CD4-positive, alpha-beta T cell (primary cell): ENCODE measurements at regions of chr7 and their contacts with region 1.

Region 1: DNA sequence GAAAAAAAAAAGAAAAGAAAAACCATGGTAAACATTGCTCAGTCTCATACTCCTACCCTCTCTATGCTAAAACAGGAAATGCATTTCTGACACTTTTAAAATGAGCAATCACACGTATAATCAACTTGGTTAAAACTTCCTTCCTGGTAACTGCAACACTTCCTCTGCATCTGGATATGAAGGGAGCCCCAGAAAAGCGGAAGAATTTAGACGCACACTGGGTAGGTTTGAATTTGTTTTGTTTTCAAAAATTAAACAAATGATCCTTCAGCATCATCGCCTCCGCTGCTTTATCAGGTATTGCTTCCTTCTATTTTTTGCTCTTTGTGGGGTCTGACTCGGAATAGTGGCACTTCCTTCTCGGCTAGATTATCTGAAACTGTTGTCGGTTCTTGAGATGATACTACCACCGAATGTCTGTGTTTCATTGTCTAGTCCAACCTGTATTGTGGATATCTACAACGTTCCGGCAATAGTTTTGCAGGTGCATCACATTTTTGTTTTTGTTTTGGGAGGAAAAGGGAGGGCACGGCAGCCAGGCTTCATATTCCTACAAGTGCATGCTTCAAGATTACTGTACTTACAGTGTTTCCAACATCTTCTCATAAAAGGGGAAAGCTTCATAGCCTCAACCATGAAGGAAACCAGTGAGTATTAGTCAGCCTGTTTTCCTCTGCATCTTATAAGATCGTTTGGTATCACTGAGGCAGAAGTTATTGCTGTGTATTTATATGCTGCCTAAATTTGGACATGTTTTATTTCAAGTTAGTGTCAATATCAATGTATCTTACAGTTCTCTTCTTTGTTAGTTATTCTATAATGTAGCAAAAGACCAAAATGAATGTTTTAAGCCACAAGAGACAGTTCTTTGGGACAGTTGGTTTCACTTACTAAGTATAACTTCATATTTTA is at the start of gene PIK3CG:
- DNase-seq: peak in 5 of 14 experiments; percentile 6 to 86 (median 75)
- ATAC-seq: peak; percentile 94
- H3K4me3 ChIP-seq: peak within 1 kb of the TSS; percentile 62
- H3K4me3 Mint-ChIP-seq: peak within 1 kb of the TSS; percentile 92
- H3K27ac ChIP-seq: peak within 1 kb of the TSS; percentile 77 to 80
- H3K27ac Mint-ChIP-seq: peak within 1 kb of the TSS; percentile 93
- H3K4me1 ChIP-seq: peaks cover 61% of the 10 kb centered on the region
- H3K4me1 Mint-ChIP-seq: peaks cover 82% of the 10 kb centered on the region
- H3K27me3 ChIP-seq: no peaks in the 10 kb centered on the region
- H3K27me3 Mint-ChIP-seq: no peaks in the 10 kb centered on the region
- CTCF ChIP-seq: no peak
- total RNA-seq, gene PIK3CG: 20.8 to 21.2 TPM

Region 2: GRCh38 chr7:106009403-106010226 is 855.8 kb before region 1 on chr7:
- CTCF ChIA-PET with region 1: no interaction called
- POLR2A ChIA-PET with region 1: no interaction called
- intact Hi-C with region 1: no loop called
- DNase-seq: peak; percentile 70 to 91 (median 78)
- ATAC-seq: peak; percentile 97
- H3K4me3 ChIP-seq: no peak overlapping the region
- H3K4me3 Mint-ChIP-seq: peak overlapping the region; percentile 16
- H3K27ac ChIP-seq: no peak overlapping the region
- H3K27ac Mint-ChIP-seq: peak overlapping the region; percentile 38
- H3K4me1 ChIP-seq: peaks cover 21% of the 10 kb centered on the region
- H3K4me1 Mint-ChIP-seq: peaks cover 51% of the 10 kb centered on the region
- H3K27me3 ChIP-seq: no peaks in the 10 kb centered on the region
- H3K27me3 Mint-ChIP-seq: no peaks in the 10 kb centered on the region
- CTCF ChIP-seq: peak; percentile 99

Region 3: DNA sequence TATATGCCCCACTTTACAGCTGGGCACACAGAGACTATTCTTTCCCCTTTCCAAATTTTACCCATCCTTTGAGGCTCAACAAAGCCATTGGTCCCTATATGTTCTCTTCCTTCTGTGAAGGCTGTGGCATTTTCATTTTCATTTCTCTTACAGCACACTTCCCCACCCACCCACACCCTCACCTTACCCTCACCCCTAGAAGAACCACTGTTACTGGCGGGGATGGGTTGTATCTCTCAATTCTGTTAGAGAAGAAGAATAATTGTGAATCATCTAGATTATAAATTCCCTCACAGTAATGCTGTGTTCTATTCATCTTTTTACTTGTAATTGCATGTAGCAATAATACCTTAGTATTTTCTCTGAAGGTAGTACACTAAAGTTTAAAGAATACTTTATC is 194.2 kb before region 1 on chr7:
- CTCF ChIA-PET with region 1: no interaction called
- POLR2A ChIA-PET with region 1: no interaction called
- intact Hi-C with region 1: loop called in 1 of 2 experiments (anchors 5 kb)
- DNase-seq: no peak
- ATAC-seq: no peak
- H3K4me3 ChIP-seq: no peak overlapping the region
- H3K4me3 Mint-ChIP-seq: no peak overlapping the region
- H3K27ac ChIP-seq: no peak overlapping the region
- H3K27ac Mint-ChIP-seq: no peak overlapping the region
- H3K4me1 ChIP-seq: no peaks in the 10 kb centered on the region
- H3K4me1 Mint-ChIP-seq: no peaks in the 10 kb centered on the region
- H3K27me3 ChIP-seq: no peaks in the 10 kb centered on the region
- H3K27me3 Mint-ChIP-seq: no peaks in the 10 kb centered on the region
- CTCF ChIP-seq: no peak

Region 4: DNA sequence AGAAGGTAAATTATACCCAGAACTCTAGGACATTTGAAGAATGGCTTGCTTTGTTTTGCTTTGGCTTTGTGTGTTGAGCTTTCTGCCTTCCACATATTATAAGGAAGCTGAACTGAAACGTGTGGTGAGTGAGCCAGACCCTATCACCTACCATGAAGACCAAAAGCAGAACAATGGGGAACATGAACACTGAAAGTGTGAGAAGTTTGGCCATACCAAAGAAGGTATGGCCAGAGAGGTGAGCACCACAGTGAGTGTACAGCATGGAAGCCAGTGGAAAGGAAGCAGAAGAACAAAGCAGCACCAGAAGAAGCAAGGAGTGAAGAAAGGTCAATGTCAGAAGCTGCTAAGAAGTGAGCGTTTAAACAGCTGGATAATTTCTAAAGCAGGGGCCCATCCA is 144.7 kb before region 1 on chr7:
- CTCF ChIA-PET with region 1: no interaction called
- POLR2A ChIA-PET with region 1: no interaction called
- intact Hi-C with region 1: no loop called
- DNase-seq: peak in 1 of 14 experiments; percentile 3
- ATAC-seq: no peak
- H3K4me3 ChIP-seq: no peak overlapping the region
- H3K4me3 Mint-ChIP-seq: no peak overlapping the region
- H3K27ac ChIP-seq: no peak overlapping the region
- H3K27ac Mint-ChIP-seq: no peak overlapping the region
- H3K4me1 ChIP-seq: peaks cover 6% of the 10 kb centered on the region
- H3K4me1 Mint-ChIP-seq: no peaks in the 10 kb centered on the region
- H3K27me3 ChIP-seq: no peaks in the 10 kb centered on the region
- H3K27me3 Mint-ChIP-seq: no peaks in the 10 kb centered on the region
- CTCF ChIP-seq: no peak

Region 5: DNA sequence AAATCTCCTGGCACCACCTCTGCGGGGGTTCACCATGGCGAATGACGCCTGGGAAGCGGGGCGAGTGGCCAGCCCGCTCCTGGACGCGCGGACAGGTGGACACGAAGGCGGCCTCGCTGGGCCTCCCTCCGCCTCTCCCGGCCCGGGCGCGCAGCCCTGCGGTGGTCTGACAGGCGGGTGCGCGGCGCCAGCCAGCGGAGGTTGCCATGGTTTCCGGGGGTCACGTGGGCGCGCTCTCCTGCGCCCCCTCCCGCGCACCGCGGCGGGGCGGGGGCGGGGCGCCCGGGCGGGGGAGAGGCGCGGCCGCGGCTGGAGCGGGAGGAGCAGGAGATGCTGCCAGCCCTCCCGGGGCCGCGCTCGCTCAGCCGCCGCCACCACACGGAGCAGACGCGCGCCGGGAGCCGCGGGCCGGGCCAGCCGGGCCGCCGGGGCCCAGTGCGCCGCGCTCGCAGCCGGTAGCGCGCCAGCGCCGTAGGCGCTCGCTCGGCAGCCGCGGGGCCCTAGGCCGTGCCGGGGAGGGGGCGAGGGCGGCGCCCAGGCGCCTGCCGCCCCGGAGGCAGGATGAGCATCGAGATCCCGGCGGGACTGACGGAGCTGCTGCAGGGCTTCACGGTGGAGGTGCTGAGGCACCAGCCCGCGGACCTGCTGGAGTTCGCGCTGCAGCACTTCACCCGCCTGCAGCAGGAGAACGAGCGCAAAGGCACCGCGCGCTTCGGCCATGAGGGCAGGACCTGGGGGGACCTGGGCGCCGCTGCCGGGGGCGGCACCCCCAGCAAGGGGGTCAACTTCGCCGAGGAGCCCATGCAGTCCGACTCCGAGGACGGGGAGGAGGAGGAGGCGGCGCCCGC is 179.2 kb after region 1 on chr7 and contains the start of gene PRKAR2B:
- CTCF ChIA-PET with region 1: no interaction called
- POLR2A ChIA-PET with region 1: no interaction called
- intact Hi-C with region 1: loop called in 1 of 2 experiments (anchors 10 kb)
- DNase-seq: peak; percentile 56 to 93 (median 71)
- ATAC-seq: peak; percentile 94
- H3K4me3 ChIP-seq: peak within 1 kb of the TSS; percentile 60
- H3K4me3 Mint-ChIP-seq: peak within 1 kb of the TSS; percentile 94
- H3K27ac ChIP-seq: no peak within 1 kb of the TSS
- H3K27ac Mint-ChIP-seq: peak within 1 kb of the TSS; percentile 39
- H3K4me1 ChIP-seq: peaks cover 10% of the 10 kb centered on the region
- H3K4me1 Mint-ChIP-seq: peaks cover 13% of the 10 kb centered on the region
- H3K27me3 ChIP-seq: peaks cover 12 to 30% of the 10 kb centered on the region in 2 experiments
- H3K27me3 Mint-ChIP-seq: peaks cover 43% of the 10 kb centered on the region
- CTCF ChIP-seq: no peak
- total RNA-seq, gene PRKAR2B: 0.41 to 0.42 TPM